B cell (primary cell): ENCODE measurements at regions of chr11 and their contacts with region 1.

Region 1: DNA sequence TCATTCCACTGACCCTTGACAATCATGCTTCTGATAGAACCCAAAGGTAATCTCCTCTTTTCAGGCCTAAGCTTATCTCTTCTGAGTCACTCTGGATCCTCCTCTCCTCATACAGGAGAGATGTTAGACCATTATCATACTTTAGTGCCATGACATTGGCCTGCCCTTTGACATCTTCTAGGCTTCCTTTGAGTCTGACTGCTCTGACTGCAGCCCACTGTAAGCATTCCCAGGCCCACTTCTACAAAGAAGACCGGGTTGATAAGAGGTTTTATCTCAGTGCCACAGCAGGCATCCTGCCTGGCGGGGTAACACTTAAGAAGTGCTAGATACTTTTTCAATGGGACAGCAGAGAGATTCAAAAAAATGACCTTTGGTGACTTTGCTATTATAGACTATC is 438.0 kb downstream of the KCNA4 start:
- DNase-seq: no peak
- ATAC-seq: no peak
- H3K4me3 ChIP-seq: no peak overlapping the region
- H3K4me3 Mint-ChIP-seq: no peak overlapping the region
- H3K27ac ChIP-seq: no peak overlapping the region
- H3K27ac Mint-ChIP-seq: no peak overlapping the region
- H3K4me1 ChIP-seq: no peaks in the 10 kb centered on the region
- H3K4me1 Mint-ChIP-seq: no peaks in the 10 kb centered on the region
- H3K27me3 ChIP-seq: no peaks in the 10 kb centered on the region
- H3K27me3 Mint-ChIP-seq: no peaks in the 10 kb centered on the region
- CTCF ChIP-seq: no peak

Region 2: DNA sequence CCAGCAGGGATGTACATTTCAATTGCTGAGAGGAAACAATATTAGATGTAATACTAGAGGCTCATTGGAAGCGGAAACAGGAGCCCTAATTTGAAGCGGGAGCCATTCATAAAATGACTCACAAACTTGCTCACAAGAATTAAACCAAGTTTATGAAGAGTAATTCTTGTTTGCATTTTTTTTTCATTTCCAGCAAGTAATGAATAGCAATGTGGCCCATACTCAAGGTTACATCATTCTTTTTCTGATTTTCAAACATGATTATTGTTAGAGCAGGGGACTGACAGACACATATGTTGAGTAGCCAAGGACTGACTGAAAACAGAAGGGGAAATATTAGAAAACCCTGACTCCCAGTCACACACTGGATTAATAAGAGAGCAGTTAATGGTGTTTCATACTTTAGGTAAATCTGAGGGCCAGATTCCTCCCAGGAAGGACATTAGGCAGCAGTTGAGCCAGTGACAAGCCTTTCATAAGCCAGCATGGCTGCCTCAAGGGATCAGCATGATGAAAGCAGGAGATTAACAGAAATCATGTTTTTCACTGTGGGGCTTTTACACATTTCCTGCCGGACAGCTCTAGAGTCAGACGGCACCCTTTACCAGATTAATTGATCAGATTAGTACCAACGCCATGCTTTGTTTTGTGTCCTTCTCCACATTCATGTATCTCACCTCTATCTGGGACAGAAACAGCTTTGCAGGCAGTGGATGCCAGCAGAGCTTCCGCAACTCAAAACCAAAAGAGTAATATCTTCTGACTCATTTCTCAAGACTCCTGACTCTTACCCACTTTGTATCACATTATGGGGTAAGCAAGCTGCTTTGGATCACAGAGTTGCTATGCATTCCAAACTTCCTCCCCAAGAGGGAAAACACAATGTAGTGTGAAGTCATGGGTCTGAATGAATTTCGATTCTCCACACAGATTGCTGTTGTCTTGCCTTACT is 393.6 kb before region 1 on chr11:
- CTCF ChIA-PET with region 1: no interaction called
- POLR2A ChIA-PET with region 1: no interaction called
- intact Hi-C with region 1: loop called (anchors 10 kb)
- DNase-seq: no peak
- ATAC-seq: no peak
- H3K4me3 ChIP-seq: no peak overlapping the region
- H3K4me3 Mint-ChIP-seq: no peak overlapping the region
- H3K27ac ChIP-seq: no peak overlapping the region
- H3K27ac Mint-ChIP-seq: no peak overlapping the region
- H3K4me1 ChIP-seq: no peaks in the 10 kb centered on the region
- H3K4me1 Mint-ChIP-seq: no peaks in the 10 kb centered on the region
- H3K27me3 ChIP-seq: no peaks in the 10 kb centered on the region
- H3K27me3 Mint-ChIP-seq: no peaks in the 10 kb centered on the region
- CTCF ChIP-seq: no peak